ENCODE measurements at regions of chr4 and their contacts with region 1.

Region 1: GRCh38 chr4:159980831-159981468 is 878.1 kb downstream of the RAPGEF2 start:
- DNase-seq: no peak
- ATAC-seq: no peak
- H3K4me3 ChIP-seq: no peak overlapping the region
- H3K27ac ChIP-seq: no peak overlapping the region
- H3K4me1 ChIP-seq: no peaks in the 10 kb centered on the region
- H3K27me3 ChIP-seq: no peaks in the 10 kb centered on the region
- CTCF ChIP-seq: no peak
- EP300 ChIP-seq: no peak
- POLR2A ChIP-seq: no peak
- RAD21 ChIP-seq: no peak

Region 2: DNA sequence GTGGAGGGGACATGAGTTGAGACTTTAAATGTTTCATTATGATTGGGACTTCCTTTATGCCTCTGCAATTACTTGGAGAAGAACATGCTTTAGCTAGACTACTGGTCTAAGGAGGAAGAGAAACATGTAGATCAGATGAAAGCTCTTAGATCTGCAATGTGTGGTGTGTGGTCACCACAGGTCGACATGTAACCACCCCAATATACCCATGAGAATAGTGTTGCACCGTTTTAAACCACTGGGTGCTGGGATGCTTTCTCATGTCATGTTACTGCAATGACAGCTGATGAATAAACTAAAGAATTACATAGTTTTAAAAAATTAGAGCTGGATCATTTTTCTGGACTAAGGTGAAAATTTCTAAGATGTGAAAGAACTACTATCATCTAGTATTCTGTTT is 161.6 kb after region 1 on chr4:
- CTCF ChIA-PET with region 1: no interaction called
- POLR2A ChIA-PET with region 1: no interaction called
- RAD21 ChIA-PET with region 1: no interaction called
- SMC1A ChIA-PET with region 1: no interaction called
- in situ Hi-C with region 1: no loop called
- intact Hi-C with region 1: loop called (anchors 5 kb)
- DNase-seq: peak; percentile 75
- ATAC-seq: peak; percentile 100
- H3K4me3 ChIP-seq: no peak overlapping the region
- H3K27ac ChIP-seq: no peak overlapping the region
- H3K4me1 ChIP-seq: no peaks in the 10 kb centered on the region
- H3K27me3 ChIP-seq: no peaks in the 10 kb centered on the region
- CTCF ChIP-seq: no peak
- EP300 ChIP-seq: peak in 1 of 2 experiments; percentile 74; a peak in 1 of 4 replicates
- POLR2A ChIP-seq: no peak
- RAD21 ChIP-seq: no peak

Region 3: GRCh38 chr4:160386846-160387245 is 405.9 kb after region 1 on chr4:
- CTCF ChIA-PET with region 1: no interaction called
- POLR2A ChIA-PET with region 1: no interaction called
- RAD21 ChIA-PET with region 1: no interaction called
- SMC1A ChIA-PET with region 1: no interaction called
- in situ Hi-C with region 1: no loop called
- intact Hi-C with region 1: no loop called
- DNase-seq: no peak
- ATAC-seq: 0 out of 3 replicates have a peak, but pooled peaks have one; percentile 15
- H3K4me3 ChIP-seq: no peak overlapping the region
- H3K27ac ChIP-seq: no peak overlapping the region
- H3K4me1 ChIP-seq: no peaks in the 10 kb centered on the region
- H3K27me3 ChIP-seq: no peaks in the 10 kb centered on the region
- CTCF ChIP-seq: no peak
- EP300 ChIP-seq: no peak
- POLR2A ChIP-seq: no peak
- RAD21 ChIP-seq: no peak